ENCODE measurements at regions of chr13 and their contacts with region 1.

Region 1: GRCh38 chr13:106536244-106537034 is 977 bp upstream of the EFNB2 start:
- DNase-seq: peak; percentile 85
- ATAC-seq: peak; percentile 23
- H3K4me3 Mint-ChIP-seq: peak overlapping the region; percentile 89
- H3K27ac Mint-ChIP-seq: peak overlapping the region; percentile 61
- H3K4me1 Mint-ChIP-seq: peaks cover 21% of the 10 kb centered on the region
- H3K27me3 Mint-ChIP-seq: peaks cover 19% of the 10 kb centered on the region
- CTCF ChIP-seq: peak; percentile 77

Region 2: DNA sequence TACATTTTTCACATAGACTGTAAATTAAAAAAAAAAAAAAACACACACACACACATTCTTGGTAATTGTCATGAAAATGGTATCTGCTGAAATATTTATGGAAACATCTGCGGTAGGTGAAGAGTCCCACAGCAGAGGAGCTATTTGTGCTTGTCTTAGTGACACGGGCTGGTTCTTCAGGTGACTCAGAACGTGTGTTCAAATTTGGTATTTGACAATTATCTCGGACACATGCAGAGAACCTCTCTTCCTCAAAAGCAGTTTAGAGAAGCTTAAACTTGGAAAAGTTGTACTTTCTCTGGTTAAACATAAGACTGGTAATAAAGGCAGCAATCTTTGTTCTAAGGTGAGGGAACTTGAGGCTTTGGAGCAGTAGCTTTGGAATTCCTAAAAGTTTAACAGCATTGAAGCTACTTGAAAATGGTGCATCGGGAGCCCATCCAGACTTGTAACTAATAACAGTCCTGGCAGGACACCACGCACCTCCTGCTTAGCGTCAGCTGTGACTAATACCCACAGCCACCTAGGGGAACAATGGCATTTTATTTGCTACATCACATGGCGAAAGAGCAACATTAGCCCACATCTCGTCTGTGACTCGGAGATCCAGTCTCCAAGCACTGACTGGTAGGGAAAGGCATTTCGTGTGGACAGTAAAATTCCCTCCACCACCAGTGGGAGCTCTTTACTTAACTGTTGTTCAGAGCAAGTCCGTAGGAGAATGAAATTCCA is 1965.1 kb before region 1 on chr13:
- CTCF ChIA-PET with region 1: no interaction called
- POLR2A ChIA-PET with region 1: no interaction called
- intact Hi-C with region 1: loop called (anchors 2 kb)
- DNase-seq: no peak
- ATAC-seq: no peak
- H3K4me3 Mint-ChIP-seq: no peak overlapping the region
- H3K27ac Mint-ChIP-seq: no peak overlapping the region
- H3K4me1 Mint-ChIP-seq: no peaks in the 10 kb centered on the region
- H3K27me3 Mint-ChIP-seq: no peaks in the 10 kb centered on the region
- CTCF ChIP-seq: no peak

Region 3: GRCh38 chr13:105139380-105140285 is 1396.8 kb before region 1 on chr13:
- CTCF ChIA-PET with region 1: no interaction called
- POLR2A ChIA-PET with region 1: no interaction called
- intact Hi-C with region 1: loop called (anchors 2 kb)
- DNase-seq: peak; percentile 26
- ATAC-seq: peak; percentile 94
- H3K4me3 Mint-ChIP-seq: peak overlapping the region; percentile 91
- H3K27ac Mint-ChIP-seq: peak overlapping the region; percentile 95
- H3K4me1 Mint-ChIP-seq: peaks cover 19% of the 10 kb centered on the region
- H3K27me3 Mint-ChIP-seq: no peaks in the 10 kb centered on the region
- CTCF ChIP-seq: no peak

Region 4: DNA sequence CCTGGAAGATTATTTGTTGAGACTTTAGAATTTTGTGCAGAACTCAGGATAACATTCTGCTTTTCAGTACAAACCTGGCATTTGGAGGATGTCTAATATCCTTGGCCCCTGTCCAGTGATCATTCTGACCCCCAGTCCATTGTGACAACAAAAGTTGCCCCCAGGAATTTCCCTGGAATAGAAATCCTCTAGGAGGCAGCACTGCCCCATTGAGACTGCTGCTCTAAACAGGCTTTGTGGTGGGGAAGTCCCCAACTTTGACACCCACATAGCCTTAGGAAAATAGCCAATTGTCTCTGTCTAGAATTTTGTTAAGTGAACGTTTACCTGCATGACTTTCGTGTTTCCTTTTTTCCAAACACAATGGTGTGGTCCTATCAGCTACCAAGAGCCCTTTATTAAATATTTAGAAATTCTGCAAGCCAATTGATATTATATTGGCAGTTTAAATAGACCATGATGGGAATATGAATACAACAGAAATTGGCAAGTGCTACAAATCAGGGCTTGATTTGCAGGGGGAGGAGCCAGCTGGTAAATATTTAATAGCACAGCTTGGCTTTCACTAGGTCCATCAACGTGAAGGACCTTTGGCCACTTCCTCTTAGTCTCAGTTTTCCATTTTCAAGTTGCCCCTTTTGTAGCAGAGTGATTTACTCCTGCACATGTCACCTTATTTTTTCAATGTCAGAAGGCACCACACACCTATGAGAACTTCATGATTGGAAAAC is 452.7 kb before region 1 on chr13:
- CTCF ChIA-PET with region 1: no interaction called
- POLR2A ChIA-PET with region 1: no interaction called
- intact Hi-C with region 1: loop called (anchors 10 kb)
- DNase-seq: no peak
- ATAC-seq: no peak
- H3K4me3 Mint-ChIP-seq: no peak overlapping the region
- H3K27ac Mint-ChIP-seq: no peak overlapping the region
- H3K4me1 Mint-ChIP-seq: no peaks in the 10 kb centered on the region
- H3K27me3 Mint-ChIP-seq: no peaks in the 10 kb centered on the region
- CTCF ChIP-seq: no peak

Region 5: DNA sequence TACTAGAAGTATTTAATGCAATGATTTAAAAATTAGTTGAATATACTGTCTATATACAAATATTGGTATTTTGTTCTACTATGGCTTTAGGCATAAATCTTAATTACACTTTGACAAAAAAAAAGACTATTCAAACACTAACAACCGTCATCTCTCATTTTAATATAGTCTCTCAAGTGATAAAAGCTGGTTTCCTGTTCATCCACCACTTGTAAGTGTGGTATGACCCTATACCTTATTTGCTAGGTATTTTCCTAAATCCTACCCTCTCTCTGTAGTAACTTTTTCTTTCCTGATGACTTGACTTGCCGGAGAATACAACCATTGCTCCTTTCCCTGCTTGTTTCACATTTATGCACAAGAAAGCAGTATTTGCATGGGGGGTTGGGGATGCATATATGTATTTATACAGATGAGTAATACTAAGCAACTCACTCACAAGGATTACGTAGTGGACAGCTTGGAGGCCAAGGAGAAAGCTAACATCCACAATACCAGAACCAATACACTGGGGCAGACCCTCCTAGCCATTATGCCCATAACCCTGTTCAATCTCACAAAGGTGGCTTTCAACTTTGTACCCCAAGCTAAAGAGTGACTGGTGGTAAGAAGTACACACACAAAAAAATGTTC is 11.7 kb after region 1 on chr13:
- CTCF ChIA-PET with region 1: interaction called, 12 read pairs
- POLR2A ChIA-PET with region 1: no interaction called
- intact Hi-C with region 1: no loop called
- DNase-seq: no peak
- ATAC-seq: no peak
- H3K4me3 Mint-ChIP-seq: no peak overlapping the region
- H3K27ac Mint-ChIP-seq: no peak overlapping the region
- H3K4me1 Mint-ChIP-seq: peaks cover 5% of the 10 kb centered on the region
- H3K27me3 Mint-ChIP-seq: no peaks in the 10 kb centered on the region
- CTCF ChIP-seq: no peak

Region 6: DNA sequence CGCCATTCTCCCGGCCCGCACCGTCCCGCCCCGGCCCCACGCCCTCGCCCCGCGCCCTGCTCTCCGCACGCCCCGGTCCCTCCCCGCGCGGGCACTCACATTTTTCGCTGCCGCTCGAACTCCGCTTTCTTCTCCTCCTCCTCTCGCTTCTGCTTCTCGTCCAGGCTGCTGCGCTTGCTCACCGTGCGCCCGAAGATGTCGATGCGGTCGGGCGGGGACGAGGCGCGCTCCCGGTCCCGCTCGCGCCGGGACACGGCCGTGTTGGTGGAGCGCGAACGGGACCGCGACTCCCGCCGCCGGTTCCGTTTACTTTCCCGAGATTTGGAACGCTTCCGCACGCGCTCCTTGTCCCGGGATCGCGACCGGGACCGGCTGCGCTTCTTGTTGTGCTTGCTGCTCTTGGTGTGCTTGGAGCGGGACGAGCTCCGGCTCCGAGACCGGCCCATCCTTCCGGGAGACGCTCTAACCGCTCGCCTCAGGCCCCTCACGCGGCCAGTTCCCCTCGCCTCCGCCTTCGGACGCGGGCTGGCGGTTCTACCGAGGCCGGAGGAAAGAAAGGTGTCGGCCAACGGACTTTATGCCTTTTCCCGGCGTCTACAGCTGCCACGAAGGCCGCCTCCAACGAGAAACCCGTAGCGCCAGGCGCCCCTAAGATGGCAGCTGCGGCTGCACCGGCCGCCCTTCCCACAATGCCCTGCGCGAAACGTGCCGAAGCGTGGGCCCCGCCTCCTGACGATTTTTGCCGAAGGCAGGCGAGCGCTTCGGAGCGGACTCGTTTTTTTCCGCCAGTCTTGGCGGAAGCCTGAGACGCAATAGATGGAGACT is 31.2 kb after region 1 on chr13 and contains the start of gene ARGLU1:
- CTCF ChIA-PET with region 1: interaction called, 17 read pairs
- POLR2A ChIA-PET with region 1: interaction called, 28 read pairs
- intact Hi-C with region 1: loop called (anchors 1 kb)
- DNase-seq: peak; percentile 97
- ATAC-seq: peak; percentile 83
- H3K4me3 Mint-ChIP-seq: peak within 1 kb of the TSS; percentile 88
- H3K27ac Mint-ChIP-seq: peak within 1 kb of the TSS; percentile 93
- H3K4me1 Mint-ChIP-seq: peaks cover 53% of the 10 kb centered on the region
- H3K27me3 Mint-ChIP-seq: no peaks in the 10 kb centered on the region
- CTCF ChIP-seq: no peak
- total RNA-seq, gene ARGLU1: 108 and 112 TPM in 2 replicates

Measured in activated B cell treated with CpG ODN at 0.5 μM for 24 hours (primary cell).